Mammary epithelial cell (primary cell): ENCODE measurements at regions of chr17 and their contacts with region 1.

Region 1: GRCh38 chr17:42819944-42820535 is 4.0 kb downstream of the BECN1 start:
- DNase-seq: peak; percentile 32
- H3K4me3 ChIP-seq: no peak overlapping the region
- H3K27ac ChIP-seq: no peak overlapping the region
- H3K4me1 ChIP-seq: peaks cover 6% of the 10 kb centered on the region
- H3K27me3 ChIP-seq: no peaks in the 10 kb centered on the region
- CTCF ChIP-seq: peak; percentile 75 to 90

Region 2: DNA sequence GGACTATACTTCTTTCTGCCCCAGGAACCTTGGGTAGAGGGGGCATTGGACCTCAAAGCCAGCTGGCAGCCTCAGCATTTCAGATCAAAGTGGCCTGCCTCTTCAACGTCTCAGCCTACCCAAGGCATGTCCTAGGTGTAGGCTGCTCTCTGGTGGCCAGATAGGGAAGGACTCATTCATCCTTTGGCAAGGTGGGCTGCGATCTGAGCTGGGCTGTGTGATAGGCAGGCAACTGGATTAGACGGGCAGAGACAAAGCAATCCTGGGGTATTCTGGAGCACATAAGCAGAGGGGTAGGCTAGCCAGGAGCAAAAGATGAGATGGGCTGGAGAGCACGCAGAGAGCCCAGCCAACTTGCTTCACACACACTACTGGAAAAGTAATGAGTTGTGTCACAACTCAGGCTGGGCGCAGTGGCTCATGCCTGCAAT is 292.8 kb before region 1 on chr17:
- CTCF ChIA-PET with region 1: no interaction called
- dilution Hi-C with region 1: no loop called
- in situ Hi-C with region 1: no loop called
- intact Hi-C with region 1: no loop called
- DNase-seq: peak; percentile 63
- H3K4me3 ChIP-seq: no peak overlapping the region
- H3K27ac ChIP-seq: no peak overlapping the region
- H3K4me1 ChIP-seq: peaks cover 40% of the 10 kb centered on the region
- H3K27me3 ChIP-seq: no peaks in the 10 kb centered on the region
- CTCF ChIP-seq: peak; percentile 86 to 93

Region 3: GRCh38 chr17:42618442-42619150 is 201.4 kb before region 1 on chr17:
- CTCF ChIA-PET with region 1: no interaction called
- dilution Hi-C with region 1: loop called (anchors 10 kb)
- in situ Hi-C with region 1: no loop called
- intact Hi-C with region 1: no loop called
- DNase-seq: peak; percentile 73
- H3K4me3 ChIP-seq: no peak overlapping the region
- H3K27ac ChIP-seq: no peak overlapping the region
- H3K4me1 ChIP-seq: peaks cover 15% of the 10 kb centered on the region
- H3K27me3 ChIP-seq: no peaks in the 10 kb centered on the region
- CTCF ChIP-seq: peak in 1 of 2 donors; percentile 65

Region 4: DNA sequence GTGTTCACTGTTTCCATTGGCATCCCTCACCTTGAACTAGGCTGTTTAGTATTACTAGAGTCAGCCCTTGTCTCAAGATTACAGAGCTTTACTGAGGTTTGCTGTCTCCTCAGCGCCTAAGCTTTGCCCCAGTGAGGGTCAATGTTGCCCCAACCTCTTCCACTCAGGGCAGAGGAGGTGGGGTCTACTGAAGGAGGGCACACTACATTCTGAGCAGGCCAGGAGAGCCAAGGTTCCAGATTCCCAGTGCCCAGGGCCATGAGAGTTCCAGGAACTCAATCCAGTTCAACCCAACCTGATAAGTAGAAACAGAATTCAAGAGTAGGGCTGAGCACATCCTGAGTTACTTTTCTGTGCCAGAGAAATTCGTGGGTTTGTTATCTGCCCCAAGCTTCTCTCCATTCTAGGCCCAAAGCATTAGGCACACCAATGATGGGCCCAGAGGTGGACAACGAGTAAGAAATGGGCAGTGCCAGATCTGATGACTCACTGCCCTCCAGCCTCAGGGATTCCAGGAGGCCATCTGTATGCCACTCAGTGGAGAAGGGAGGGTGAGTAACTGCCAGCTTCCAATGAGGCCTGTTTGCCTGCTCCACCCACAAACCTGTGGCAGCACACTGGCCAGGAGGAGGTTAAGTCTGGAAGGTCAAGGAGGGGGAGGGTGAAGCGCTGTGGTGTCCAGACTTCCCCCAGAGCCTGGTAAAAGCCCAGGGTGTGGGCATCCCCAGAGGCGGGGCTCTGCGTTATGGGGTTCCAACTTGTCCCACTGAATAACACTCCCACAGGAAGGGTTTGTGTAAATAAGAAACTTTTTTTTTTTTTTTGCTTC is 152.7 kb before region 1 on chr17:
- CTCF ChIA-PET with region 1: no interaction called
- dilution Hi-C with region 1: no loop called
- in situ Hi-C with region 1: no loop called
- intact Hi-C with region 1: no loop called
- DNase-seq: peak; percentile 94
- H3K4me3 ChIP-seq: no peak overlapping the region
- H3K27ac ChIP-seq: peak overlapping the region; percentile 32
- H3K4me1 ChIP-seq: peaks cover 40% of the 10 kb centered on the region
- H3K27me3 ChIP-seq: no peaks in the 10 kb centered on the region
- CTCF ChIP-seq: no peak

Region 5: GRCh38 chr17:42744806-42745617 is 75.0 kb before region 1 on chr17 and contains the start of gene EZH1:
- CTCF ChIA-PET with region 1: no interaction called
- dilution Hi-C with region 1: no loop called
- in situ Hi-C with region 1: no loop called
- intact Hi-C with region 1: loop called (anchors 1 kb)
- DNase-seq: peak; percentile 88
- H3K4me3 ChIP-seq: peak within 1 kb of the TSS; percentile 71 to 93 (median 77)
- H3K27ac ChIP-seq: peak within 1 kb of the TSS; percentile 60
- H3K4me1 ChIP-seq: peaks cover 13% of the 10 kb centered on the region
- H3K27me3 ChIP-seq: no peaks in the 10 kb centered on the region
- CTCF ChIP-seq: no peak
- total RNA-seq, gene EZH1: 17.8 to 21.3 TPM

Region 6: GRCh38 chr17:42773290-42774035 is 46.6 kb before region 1 on chr17 and contains the start of gene VPS25:
- CTCF ChIA-PET with region 1: no interaction called
- dilution Hi-C with region 1: no loop called
- in situ Hi-C with region 1: loop called in 1 of 2 experiments (anchors 5 kb)
- intact Hi-C with region 1: loop called (anchors 2 kb)
- DNase-seq: peak; percentile 81
- H3K4me3 ChIP-seq: peak within 1 kb of the TSS; percentile 65 to 84 (median 78)
- H3K27ac ChIP-seq: peak within 1 kb of the TSS; percentile 87
- H3K4me1 ChIP-seq: peaks cover 11% of the 10 kb centered on the region
- H3K27me3 ChIP-seq: no peaks in the 10 kb centered on the region
- CTCF ChIP-seq: peak in 1 of 2 donors; percentile 32
- total RNA-seq, gene VPS25: 58.0 to 83.6 TPM

Region 7: DNA sequence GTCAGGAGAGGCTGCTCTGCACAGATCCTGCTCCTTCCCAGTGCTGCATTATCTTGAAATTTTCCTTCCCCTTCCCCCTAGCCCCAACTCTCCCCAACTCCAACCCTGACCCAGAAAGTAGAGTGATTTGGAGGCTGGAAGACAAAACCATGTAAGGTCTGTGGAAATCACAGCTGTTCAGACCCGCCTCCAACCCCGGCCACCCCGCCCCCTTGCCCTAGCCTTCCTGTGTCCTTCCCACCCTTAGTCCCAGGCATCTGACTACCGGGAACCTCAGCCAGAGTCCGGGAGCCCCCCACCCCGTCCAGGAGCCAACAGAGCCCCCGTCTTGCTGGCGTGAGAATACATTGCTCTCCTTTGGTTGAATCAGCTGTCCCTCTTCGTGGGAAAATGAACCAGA is 30.9 kb after region 1 on chr17 and contains the start of gene AOC3:
- CTCF ChIA-PET with region 1: no interaction called
- dilution Hi-C with region 1: no loop called
- in situ Hi-C with region 1: no loop called
- intact Hi-C with region 1: no loop called
- DNase-seq: no peak
- H3K4me3 ChIP-seq: no peak within 1 kb of the TSS
- H3K27ac ChIP-seq: no peak within 1 kb of the TSS
- H3K4me1 ChIP-seq: peaks cover 5% of the 10 kb centered on the region
- H3K27me3 ChIP-seq: no peaks in the 10 kb centered on the region
- CTCF ChIP-seq: no peak
- total RNA-seq, gene AOC3: 0.31 TPM in 1 of 2 donors, not detected in the other

Region 8: DNA sequence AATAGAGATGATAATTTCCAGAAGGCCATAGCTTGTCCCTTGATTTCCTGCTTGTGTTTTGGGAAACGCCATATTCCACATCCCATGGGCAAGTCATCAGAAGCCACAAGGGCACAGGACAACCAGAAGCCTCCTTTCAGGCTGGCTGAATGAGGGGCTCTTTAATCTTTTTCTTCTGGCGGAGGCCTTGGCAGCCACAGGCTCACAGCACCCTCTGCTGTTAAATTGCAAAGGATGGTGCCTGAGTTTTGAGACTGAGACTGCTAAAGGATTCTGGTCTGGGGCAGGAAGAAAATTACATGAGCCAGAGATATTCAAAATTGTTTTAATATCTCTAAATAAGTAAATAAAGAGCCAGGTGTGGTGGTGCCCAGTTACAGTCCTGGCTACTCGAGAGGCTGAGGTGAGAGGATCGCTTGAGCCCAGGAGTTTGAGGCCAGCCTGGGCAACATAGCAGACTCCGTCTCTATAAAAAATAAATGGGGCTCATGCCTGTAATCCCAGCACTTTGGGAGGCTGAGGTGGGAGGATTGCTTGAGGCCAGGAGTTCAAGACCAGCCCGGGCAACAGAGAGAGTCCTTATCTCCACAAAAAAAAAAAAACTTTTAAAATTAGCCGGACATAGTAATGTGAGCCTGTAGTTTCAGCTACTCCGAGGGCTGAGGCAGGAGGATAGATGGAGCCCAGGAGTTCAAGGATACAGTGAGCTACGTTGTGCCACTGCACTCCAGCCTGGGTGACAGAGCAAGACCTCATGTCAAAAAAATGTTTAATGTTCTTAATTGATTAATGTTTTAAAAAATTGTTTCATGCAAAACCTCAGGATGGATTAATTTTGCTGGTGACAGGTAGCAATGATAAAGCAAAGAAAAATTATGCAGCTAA is 117.9 kb after region 1 on chr17:
- CTCF ChIA-PET with region 1: no interaction called
- dilution Hi-C with region 1: no loop called
- in situ Hi-C with region 1: no loop called
- intact Hi-C with region 1: loop called (anchors 1 kb)
- DNase-seq: peak; percentile 25
- H3K4me3 ChIP-seq: no peak overlapping the region
- H3K27ac ChIP-seq: no peak overlapping the region
- H3K4me1 ChIP-seq: no peaks in the 10 kb centered on the region
- H3K27me3 ChIP-seq: no peaks in the 10 kb centered on the region
- CTCF ChIP-seq: peak; percentile 25 to 62